HepG2 (cell line): ENCODE measurements at regions of chr10 and their contacts with region 1.

Region 1: GRCh38 chr10:5548527-5549223 is 23.9 kb downstream of the CALML3 start:
- DNase-seq: peak; percentile 95
- ATAC-seq: peak; percentile 84
- H3K4me3 ChIP-seq: peak overlapping the region; percentile 32 to 69 (median 38)
- H3K27ac ChIP-seq: peak overlapping the region; percentile 97
- H3K4me1 ChIP-seq: peaks cover 96% of the 10 kb centered on the region
- H3K27me3 ChIP-seq: no peaks in the 10 kb centered on the region; a peak in 1 of 5 replicates
- CTCF ChIP-seq: no peak
- EP300 ChIP-seq: peak in 1 of 2 experiments; percentile 13; a peak in 1 of 4 replicates
- POLR2A ChIP-seq: peak in 1 of 2 experiments; percentile 41; a peak in 2 of 4 replicates
- RAD21 ChIP-seq: peak; percentile 33; the same call in 1 of the 2 replicates

Region 2: GRCh38 chr10:5518138-5518537 is 30.5 kb before region 1 on chr10:
- CTCF ChIA-PET with region 1: no interaction called
- POLR2A ChIA-PET with region 1: interaction called, 17 read pairs
- in situ Hi-C with region 1: no loop called
- intact Hi-C with region 1: no loop called
- DNase-seq: peak; percentile 84
- ATAC-seq: peak; percentile 86
- H3K4me3 ChIP-seq: 0 out of 6 replicates have a peak overlapping the region, but pooled peaks of 1 of the 3 experiments have one; percentile 4
- H3K27ac ChIP-seq: peak overlapping the region; percentile 45
- H3K4me1 ChIP-seq: peaks cover 66% of the 10 kb centered on the region
- H3K27me3 ChIP-seq: no peaks in the 10 kb centered on the region
- CTCF ChIP-seq: no peak
- EP300 ChIP-seq: peak in 1 of 2 experiments; percentile 68; a peak in 2 of 4 replicates
- POLR2A ChIP-seq: no peak
- RAD21 ChIP-seq: no peak

Region 3: GRCh38 chr10:5534880-5535856 is 13.5 kb before region 1 on chr10:
- CTCF ChIA-PET with region 1: no interaction called
- POLR2A ChIA-PET with region 1: interaction called, 20 read pairs
- in situ Hi-C with region 1: no loop called
- intact Hi-C with region 1: loop called (anchors 2 kb)
- DNase-seq: peak; percentile 73
- ATAC-seq: no peak
- H3K4me3 ChIP-seq: no peak overlapping the region
- H3K27ac ChIP-seq: peak overlapping the region; percentile 20
- H3K4me1 ChIP-seq: peaks cover 90% of the 10 kb centered on the region
- H3K27me3 ChIP-seq: no peaks in the 10 kb centered on the region
- CTCF ChIP-seq: no peak
- EP300 ChIP-seq: peak in 1 of 2 experiments; percentile 51; a peak in 1 of 4 replicates
- POLR2A ChIP-seq: no peak
- RAD21 ChIP-seq: no peak

Region 4: DNA sequence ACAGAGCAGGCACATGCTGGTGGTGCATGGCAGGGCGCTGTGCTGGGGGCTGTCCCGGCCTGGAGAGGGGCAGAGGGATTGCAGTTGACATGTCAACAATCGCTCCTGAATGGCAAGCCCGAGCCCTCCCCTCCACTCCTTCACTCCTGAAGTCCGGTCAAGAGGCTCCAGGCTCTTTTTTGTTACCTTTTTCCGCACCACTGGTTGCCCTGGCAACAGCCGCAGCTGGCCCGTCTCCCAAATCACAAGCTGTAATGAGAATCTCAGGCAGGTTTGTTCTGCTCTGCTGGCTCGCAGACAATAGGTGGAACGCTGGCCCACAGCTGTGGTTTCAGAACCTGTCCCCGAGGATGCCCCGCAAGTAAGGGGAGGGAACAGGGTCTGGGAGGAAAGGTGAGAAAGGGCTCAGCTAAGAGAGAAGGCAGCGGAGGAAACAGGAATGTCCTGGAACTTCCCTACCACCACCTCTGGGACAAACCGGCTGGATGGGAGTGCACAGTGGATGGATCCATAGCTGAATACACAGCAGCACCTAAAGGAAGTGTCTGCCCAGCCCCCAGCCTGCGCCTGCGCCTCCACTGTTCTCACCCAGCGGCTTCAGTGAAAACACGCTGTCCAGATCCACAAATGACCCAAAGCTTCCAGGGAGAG is 35.0 kb after region 1 on chr10:
- CTCF ChIA-PET with region 1: no interaction called
- POLR2A ChIA-PET with region 1: interaction called, 10 read pairs
- in situ Hi-C with region 1: no loop called
- intact Hi-C with region 1: loop called (anchors 2 kb)
- DNase-seq: no peak
- ATAC-seq: peak; percentile 11; the same call in 1 of the 3 replicates
- H3K4me3 ChIP-seq: peak overlapping the region in 1 of 3 experiments; percentile 20; a peak in 1 of 6 replicates
- H3K27ac ChIP-seq: no peak overlapping the region
- H3K4me1 ChIP-seq: peaks cover 84% of the 10 kb centered on the region
- H3K27me3 ChIP-seq: peaks cover 0 to 36% of the 10 kb centered on the region in 2 experiments; a peak in 3 of 5 replicates
- CTCF ChIP-seq: no peak
- EP300 ChIP-seq: no peak
- POLR2A ChIP-seq: no peak
- RAD21 ChIP-seq: no peak

Region 5: GRCh38 chr10:5623081-5623748 is 74.5 kb after region 1 on chr10:
- CTCF ChIA-PET with region 1: no interaction called
- POLR2A ChIA-PET with region 1: interaction called, 19 read pairs
- in situ Hi-C with region 1: no loop called
- intact Hi-C with region 1: loop called (anchors 2 kb)
- DNase-seq: peak; percentile 74
- ATAC-seq: peak; percentile 86
- H3K4me3 ChIP-seq: peak overlapping the region in 2 of 3 experiments; percentile 38 to 68; a peak in 2 of 6 replicates
- H3K27ac ChIP-seq: no peak overlapping the region
- H3K4me1 ChIP-seq: peaks cover 54% of the 10 kb centered on the region
- H3K27me3 ChIP-seq: no peaks in the 10 kb centered on the region; a peak in 1 of 5 replicates
- CTCF ChIP-seq: peak; percentile 100
- EP300 ChIP-seq: no peak; a peak in 1 of 4 replicates
- POLR2A ChIP-seq: no peak
- RAD21 ChIP-seq: peak; percentile 99

Region 6: DNA sequence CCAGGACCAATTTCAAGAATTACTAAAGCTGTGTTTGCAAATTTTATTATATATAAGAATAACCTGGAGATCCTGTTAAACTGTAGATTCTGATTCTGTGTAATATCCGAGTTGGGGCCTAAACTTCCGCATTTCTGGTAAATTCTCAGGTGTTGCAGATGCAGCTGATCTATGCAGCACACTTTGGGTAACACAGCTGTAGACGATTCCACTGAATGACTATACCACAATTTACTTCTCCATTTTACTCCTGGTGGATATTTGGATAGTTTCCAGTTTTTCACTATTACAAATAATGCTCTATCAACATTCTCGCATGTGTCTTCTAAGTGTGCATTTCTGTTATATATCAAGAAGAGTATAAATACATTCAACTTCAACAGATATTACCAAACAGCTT is 257.0 kb after region 1 on chr10:
- CTCF ChIA-PET with region 1: no interaction called
- POLR2A ChIA-PET with region 1: no interaction called
- in situ Hi-C with region 1: no loop called
- intact Hi-C with region 1: no loop called
- DNase-seq: no peak
- ATAC-seq: no peak
- H3K4me3 ChIP-seq: no peak overlapping the region
- H3K27ac ChIP-seq: no peak overlapping the region
- H3K4me1 ChIP-seq: peaks cover 85% of the 10 kb centered on the region
- H3K27me3 ChIP-seq: no peaks in the 10 kb centered on the region; a peak in 1 of 5 replicates
- CTCF ChIP-seq: no peak
- EP300 ChIP-seq: no peak
- POLR2A ChIP-seq: no peak
- RAD21 ChIP-seq: no peak